ENCODE measurements at regions of chr1 and their contacts with region 1.

Region 1: GRCh38 chr1:209692745-209693504 is 11.7 kb upstream of the HSD11B1 start:
- DNase-seq: peak; percentile 47 to 94 (median 81)

Region 2: GRCh38 chr1:209590405-209590804 is 102.5 kb before region 1 on chr1:
- intact Hi-C with region 1: loop called (anchors 5 kb)
- DNase-seq: peak; percentile 28 to 90 (median 70)

Region 3: DNA sequence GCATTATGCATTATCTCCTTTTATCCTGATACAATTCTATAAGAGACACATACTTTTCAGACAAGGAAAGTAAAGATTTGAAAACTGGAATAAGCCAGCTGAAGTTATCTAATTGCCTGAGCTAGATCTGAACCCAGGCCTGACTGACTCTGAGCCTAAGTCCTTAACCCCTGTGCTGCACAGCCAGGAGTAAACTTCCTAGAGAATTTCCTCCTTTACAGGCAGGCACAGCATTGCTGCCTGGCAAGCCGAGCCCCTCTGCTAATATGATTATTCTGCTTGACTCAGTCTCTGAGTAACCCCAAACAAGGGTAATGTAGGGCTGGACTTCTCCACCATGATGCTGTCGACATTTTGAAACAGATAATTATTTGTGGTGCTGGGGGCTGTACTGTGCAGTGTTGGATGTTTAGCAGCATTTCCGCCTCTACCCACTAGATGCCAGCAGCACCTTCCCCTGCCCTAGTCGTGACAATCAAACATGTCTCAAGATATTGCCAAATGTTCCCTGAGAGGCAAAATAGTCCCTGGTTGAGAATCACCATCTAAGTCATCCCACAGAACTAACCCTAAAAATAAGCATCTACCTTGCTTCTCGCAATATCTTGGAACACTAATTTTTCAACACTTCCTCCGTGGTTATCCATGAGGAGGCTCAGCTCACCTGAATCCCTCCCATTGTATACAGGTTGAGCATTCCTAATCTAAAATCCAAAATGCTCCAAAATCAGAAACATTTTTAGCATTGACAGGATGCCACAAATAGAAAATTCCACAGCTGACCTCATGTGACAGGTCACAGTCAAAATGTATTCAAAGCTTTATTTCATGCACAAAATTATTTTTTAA is 90.9 kb before region 1 on chr1:
- intact Hi-C with region 1: no loop called
- DNase-seq: peak in 34 of 42 donors; percentile 43 to 84 (median 66)

Region 4: DNA sequence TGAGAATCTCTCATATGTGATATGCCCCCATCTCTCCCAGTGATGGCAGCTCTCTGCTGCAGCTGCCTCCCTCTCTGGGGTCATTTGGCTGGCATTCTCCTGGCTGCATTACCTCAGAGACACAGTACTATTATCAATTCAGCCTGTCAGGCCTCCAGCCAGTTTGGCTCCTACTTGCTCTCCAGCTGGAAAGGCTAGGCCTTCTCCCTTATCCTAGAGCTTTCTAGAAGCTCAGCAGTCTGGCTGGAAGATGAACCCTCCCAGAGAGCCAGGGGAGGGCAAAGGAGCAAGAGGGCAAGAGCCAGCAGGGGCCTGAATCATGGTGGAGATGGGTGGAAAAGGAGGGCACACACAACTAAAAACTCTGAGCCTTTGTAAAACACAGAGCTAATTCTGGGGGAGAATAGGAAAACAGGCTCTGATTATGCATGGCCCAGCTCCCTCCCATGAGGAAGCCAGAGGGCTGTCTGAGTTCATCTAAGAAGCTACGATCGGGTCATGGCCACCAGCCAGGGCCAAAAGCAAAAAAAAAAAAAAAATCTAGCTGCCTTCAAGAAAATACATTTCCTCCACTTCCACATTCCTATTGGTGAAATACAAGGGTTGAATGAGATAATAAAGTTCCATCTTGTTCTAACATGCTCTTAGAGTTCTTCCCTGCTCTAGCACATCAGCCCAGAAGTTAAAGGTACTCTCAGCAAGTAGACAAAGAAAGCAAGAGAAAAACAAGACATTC is 49.5 kb before region 1 on chr1:
- intact Hi-C with region 1: loop called (anchors 5 kb)
- DNase-seq: peak; percentile 56 to 95 (median 80)

Region 5: DNA sequence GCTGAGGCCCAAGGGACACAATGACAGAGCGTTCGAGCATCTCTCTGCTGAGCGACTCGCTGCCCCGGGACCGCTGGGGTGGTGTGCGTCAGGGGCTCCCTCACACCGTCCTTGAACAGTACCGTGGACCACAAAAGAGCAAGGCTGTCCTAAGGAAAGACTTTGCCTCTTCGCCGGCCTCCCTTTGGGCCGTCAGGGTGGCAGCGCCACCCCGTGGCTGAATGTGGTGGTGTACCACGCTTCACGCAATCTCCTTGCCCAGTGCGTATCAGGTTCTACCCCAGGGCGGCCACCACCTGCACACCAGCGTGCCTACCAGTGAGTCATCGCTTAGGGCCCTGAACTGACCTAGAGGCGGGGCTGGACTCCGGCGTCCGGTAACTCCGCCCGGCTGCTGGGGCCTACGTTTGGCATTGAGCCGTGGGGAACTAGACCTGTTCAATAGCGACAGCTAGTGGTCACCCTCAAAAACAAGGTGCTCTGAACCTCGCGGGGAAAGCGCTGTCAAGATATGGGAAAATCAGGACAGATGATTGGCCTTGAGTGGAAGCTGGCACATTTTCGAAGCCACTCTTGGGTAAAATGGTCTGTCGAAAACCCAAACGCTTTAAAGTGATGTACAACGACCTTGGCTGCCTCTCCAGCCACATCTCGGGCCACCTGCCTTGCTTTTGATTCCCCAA is 54.8 kb after region 1 on chr1:
- intact Hi-C with region 1: loop called (anchors 5 kb)
- DNase-seq: peak; percentile 66 to 92 (median 82)

Region 6: GRCh38 chr1:209787551-209787950 is 94.6 kb after region 1 on chr1:
- intact Hi-C with region 1: no loop called
- DNase-seq: peak in 30 of 42 donors; percentile 8 to 78 (median 43)

Measured in head of caudate nucleus (tissue), 42 donors.